ENCODE measurements at regions of chr4 and their contacts with region 1.

Region 1: DNA sequence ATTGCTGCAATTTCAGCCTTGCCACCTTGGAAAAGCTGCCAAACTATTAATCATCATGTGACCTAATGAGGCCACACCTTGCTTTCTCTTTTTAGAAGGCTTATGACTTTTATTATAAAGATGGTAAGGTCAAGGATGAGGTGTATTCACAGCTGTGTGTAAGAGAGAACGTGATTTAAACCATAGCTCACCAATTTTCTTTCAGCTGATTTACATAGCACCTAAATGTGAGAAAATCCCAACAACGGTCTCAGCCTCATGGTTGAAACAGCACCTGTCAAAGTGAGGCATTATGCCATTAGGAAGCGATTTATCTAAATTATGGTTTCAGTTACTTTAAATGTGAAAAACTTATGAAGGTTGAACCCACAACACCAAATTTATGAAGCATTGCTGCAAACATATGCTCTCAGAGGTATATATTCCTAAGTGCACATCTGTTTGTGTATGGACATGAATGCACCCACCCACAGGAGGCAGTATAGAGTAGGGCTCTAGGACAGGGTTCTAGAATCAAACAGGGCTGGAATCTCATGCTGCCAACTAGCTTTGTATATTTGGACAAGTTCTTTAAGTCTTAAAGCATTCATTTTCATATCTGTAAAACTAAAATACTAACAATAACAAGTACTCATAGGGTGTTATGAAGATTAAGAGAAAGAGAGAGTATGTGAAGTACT is 40.7 kb downstream of the ANXA3 start:
- DNase-seq: no peak
- H3K4me3 ChIP-seq: no peak overlapping the region
- H3K27ac ChIP-seq: no peak overlapping the region
- H3K27me3 ChIP-seq: no peaks in the 10 kb centered on the region
- CTCF ChIP-seq: 0 out of 2 replicates have a peak, but pooled peaks have one; percentile 20

Region 2: DNA sequence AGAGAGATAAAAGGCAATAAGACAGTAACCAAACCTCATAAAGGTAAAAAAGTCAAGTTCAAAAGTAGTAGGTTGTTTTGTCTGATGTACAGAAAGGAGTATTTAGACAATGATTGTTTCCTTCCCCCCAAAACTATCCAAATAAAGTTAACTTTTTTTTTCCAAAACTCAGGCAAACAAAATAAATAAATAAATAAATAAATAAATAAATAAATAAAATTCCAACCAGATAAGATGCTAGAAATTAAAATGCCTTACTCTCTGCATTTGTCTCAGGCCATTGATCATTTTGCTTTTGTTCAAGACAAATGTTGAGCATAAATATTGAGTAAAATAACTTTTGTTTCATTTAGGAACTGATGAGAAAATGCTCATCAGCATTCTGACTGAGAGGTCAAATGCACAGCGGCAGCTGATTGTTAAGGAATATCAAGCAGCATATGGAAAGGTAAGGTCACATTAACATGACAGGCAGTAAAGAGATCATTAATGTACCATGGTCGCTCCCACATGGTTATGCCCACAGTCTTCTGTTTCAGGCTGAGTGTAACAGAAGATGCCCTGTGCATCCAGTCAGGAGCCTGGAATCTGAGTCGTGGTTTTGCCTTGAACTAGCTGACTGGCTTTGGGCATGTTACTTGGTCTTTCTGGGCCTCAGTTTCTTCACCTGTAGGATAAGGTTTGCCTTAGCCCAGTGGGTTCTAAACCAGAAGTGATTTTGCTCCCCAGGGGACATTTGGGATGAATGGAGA is 13.4 kb before region 1 on chr4:
- CTCF ChIA-PET with region 1: no interaction called
- POLR2A ChIA-PET with region 1: no interaction called
- DNase-seq: no peak
- H3K4me3 ChIP-seq: no peak overlapping the region
- H3K27ac ChIP-seq: no peak overlapping the region
- H3K27me3 ChIP-seq: no peaks in the 10 kb centered on the region
- CTCF ChIP-seq: no peak

Region 3: GRCh38 chr4:78990938-78991810 is 398.9 kb after region 1 on chr4:
- CTCF ChIA-PET with region 1: interaction called, 15 read pairs
- POLR2A ChIA-PET with region 1: no interaction called
- DNase-seq: no peak
- H3K4me3 ChIP-seq: no peak overlapping the region
- H3K27ac ChIP-seq: no peak overlapping the region
- H3K27me3 ChIP-seq: no peaks in the 10 kb centered on the region
- CTCF ChIP-seq: no peak

Measured in AG04450 (cell line).